ENCODE measurements at regions of chr12 and their contacts with region 1.

Region 1: GRCh38 chr12:124917135-124917840 is 2.8 kb upstream of the UBC start:
- DNase-seq: peak; percentile 99
- ATAC-seq: peak; percentile 94

Region 2: GRCh38 chr12:124927201-124928094 is 10.2 kb after region 1 on chr12:
- intact Hi-C with region 1: loop called (anchors 1 kb)
- DNase-seq: peak; percentile 91
- ATAC-seq: peak; percentile 96

Region 3: DNA sequence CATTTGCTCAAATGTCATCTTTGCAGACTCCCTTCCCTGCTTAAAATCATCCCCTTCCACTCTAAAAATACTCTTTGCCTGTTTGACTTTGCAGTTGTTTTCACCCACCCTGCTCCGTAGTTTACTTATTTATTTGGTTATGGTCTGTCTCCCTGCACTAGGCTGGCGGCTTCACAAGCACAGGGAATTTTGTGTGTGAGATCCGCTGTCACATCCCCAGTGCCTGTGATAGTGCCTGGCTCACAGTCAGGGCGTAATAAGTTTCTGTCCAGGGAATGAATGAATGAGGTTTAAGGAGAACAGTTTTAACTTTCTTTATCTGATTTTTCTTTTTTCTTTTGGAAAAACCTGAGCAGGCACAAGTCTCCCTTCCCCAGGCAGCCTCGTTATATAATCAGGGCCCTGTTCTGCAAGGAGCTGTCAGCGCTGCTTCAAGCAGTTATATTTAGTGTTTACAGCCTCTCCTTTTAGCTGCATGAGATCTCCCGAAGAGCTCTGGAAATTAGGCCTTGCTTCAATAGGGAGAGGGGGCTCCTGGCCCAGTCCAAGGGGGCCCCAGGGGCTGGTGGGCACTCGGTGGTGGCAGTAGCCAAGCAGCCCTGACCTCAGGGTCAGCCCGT is 255.1 kb after region 1 on chr12:
- intact Hi-C with region 1: loop called (anchors 5 kb)
- DNase-seq: no peak
- ATAC-seq: peak; percentile 51